Heart right ventricle (tissue), 16 donors: ENCODE measurements at regions of chr10 and their contacts with region 1.

Region 1: GRCh38 chr10:122142641-122143237 is 128.4 kb upstream of the BTBD16 start:
- DNase-seq: peak; percentile 45 to 62
- ATAC-seq: peak in 2 of 8 donors; percentile 1 to 21
- H3K4me3 ChIP-seq: no peak overlapping the region
- H3K27ac ChIP-seq: peak overlapping the region in 9 of 10 donors; percentile 82 to 94 (median 89)
- H3K4me1 ChIP-seq: peaks cover 39 to 84% (median 71%) of the 10 kb centered on the region in 9 donors
- H3K27me3 ChIP-seq: no peaks in the 10 kb centered on the region
- CTCF ChIP-seq: peak; percentile 89 to 96 (median 93)

Region 2: DNA sequence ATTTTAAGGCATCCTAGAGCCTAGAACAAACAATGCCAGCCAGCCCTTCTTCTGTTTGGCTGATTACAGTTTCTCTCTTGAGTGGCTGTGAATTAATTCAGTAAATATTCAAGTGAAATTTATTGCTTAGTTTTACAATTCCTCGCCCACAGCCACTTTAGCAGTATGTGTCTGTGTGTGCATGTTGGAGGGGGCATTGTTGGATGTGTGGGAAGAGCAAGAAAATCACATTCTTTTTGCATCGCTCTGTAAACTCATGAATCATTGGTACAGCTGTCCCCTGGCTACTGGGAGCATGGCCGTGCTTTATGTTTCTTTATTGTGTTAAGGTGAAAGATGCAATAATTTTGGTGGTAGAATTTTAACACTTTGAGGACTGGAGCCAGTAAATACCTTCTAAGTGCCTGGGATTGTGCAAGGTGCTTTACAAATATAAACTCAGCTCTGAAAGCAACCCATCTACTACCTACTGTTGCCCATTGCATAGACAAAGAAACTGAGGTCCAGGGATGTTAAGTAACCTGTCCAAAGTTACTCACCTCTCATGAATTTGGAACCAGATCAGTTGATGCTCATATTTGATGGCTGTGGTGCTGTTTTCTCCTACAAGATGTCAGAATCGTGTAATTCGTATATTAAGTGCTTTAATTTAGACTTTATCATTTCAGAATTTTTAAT is 38.5 kb after region 1 on chr10:
- intact Hi-C with region 1: loop called in 2 of 10 experiments (anchors 5 kb)
- DNase-seq: no peak
- ATAC-seq: no peak
- H3K4me3 ChIP-seq: no peak overlapping the region
- H3K27ac ChIP-seq: peak overlapping the region in 2 of 10 donors; percentile 17 to 23
- H3K4me1 ChIP-seq: peaks cover 13 to 40% (median 35%) of the 10 kb centered on the region in 9 donors
- H3K27me3 ChIP-seq: no peaks in the 10 kb centered on the region
- CTCF ChIP-seq: no peak

Region 3: GRCh38 chr10:122186818-122187810 is 44.4 kb after region 1 on chr10:
- intact Hi-C with region 1: loop called in 2 of 10 experiments (anchors 5 kb)
- DNase-seq: no peak
- ATAC-seq: peak in 7 of 8 donors; percentile 18 to 63 (median 29)
- H3K4me3 ChIP-seq: no peak overlapping the region
- H3K27ac ChIP-seq: peak overlapping the region in 6 of 10 donors; percentile 15 to 73 (median 50)
- H3K4me1 ChIP-seq: peaks cover 21 to 73% (median 52%) of the 10 kb centered on the region in 9 donors
- H3K27me3 ChIP-seq: no peaks in the 10 kb centered on the region
- CTCF ChIP-seq: no peak

Region 4: GRCh38 chr10:122207596-122207995 is 64.9 kb after region 1 on chr10:
- intact Hi-C with region 1: loop called in 3 of 10 experiments (anchors 5 to 10 kb)
- DNase-seq: no peak
- ATAC-seq: peak; percentile 8 to 66 (median 57)
- H3K4me3 ChIP-seq: no peak overlapping the region
- H3K27ac ChIP-seq: no peak overlapping the region
- H3K4me1 ChIP-seq: peaks cover 0 to 46% (median 23%) of the 10 kb centered on the region in 9 donors
- H3K27me3 ChIP-seq: no peaks in the 10 kb centered on the region
- CTCF ChIP-seq: no peak

Region 5: DNA sequence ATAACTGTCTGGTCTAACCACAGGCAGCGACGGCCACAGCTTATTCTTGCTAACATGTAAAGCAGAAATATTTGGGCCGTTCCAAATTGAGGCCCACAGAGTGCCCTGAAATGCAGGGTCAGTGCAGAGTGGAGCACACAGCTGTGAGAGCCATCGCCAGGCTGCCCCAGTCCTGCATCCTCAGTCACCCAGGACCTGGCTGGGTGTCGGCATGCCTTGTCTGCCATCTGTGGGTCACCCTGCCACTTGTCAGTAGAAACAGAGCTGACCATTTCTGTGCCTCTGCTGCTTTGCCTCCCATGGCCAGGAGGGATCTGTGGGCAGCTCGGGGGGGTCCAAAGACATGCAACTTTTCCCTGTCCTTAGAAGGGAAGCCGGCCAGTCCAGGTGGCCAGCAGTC is 71.0 kb after region 1 on chr10:
- intact Hi-C with region 1: loop called in 4 of 10 experiments (anchors 5 to 10 kb)
- DNase-seq: no peak
- ATAC-seq: peak in 7 of 8 donors; percentile 30 to 67 (median 58)
- H3K4me3 ChIP-seq: no peak overlapping the region
- H3K27ac ChIP-seq: no peak overlapping the region
- H3K4me1 ChIP-seq: peaks cover 0 to 12% (median 0%) of the 10 kb centered on the region in 9 donors
- H3K27me3 ChIP-seq: no peaks in the 10 kb centered on the region
- CTCF ChIP-seq: peak in 3 of 9 donors; percentile 18 to 35 (median 31)

Region 6: DNA sequence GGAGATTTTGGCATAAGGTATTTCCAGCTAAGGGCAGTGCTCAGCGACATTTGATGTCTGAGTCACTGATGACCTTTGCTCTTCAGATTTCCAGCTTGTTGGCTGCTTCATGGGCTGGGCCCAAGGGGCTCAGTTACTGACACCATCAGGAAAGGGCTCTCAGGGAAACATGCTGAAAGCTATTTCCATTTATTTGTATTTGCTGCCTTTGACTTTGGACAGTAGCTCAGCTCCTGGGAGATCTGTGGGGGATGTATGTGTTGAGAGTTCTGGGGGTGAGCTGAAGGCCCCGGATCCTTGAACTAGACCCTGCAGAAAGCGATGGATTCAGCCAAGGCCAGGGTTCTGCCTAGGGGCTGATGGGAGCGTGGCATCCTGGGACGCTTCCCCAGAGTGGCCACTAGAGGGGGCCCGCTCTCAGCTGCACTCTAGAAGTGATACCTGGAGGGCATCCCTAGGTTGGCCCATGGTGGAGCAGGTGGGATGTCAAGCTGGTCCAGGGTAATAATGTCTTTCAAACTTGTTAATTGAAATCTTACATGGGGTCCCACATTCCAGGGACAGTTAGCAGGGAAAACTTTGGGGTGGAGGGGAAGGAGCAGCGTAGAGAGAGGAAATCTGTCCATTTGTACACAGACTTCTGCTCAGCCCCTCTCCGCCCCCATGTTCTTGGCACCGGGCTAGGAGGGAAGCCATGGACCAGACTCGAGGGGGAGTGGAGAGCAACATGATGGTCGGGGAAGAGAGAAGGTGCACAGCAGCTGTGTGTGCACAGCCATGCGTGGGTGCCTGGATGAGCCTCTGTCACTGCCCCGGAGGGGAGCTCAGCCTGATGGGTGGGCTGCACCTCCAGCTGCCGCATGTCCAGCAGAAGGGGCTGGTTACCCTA is 125.4 kb after region 1 on chr10:
- intact Hi-C with region 1: loop called in 5 of 10 experiments (anchors 5 to 10 kb)
- DNase-seq: peak in 1 of 2 donors; percentile 48
- ATAC-seq: peak; percentile 43 to 78 (median 70)
- H3K4me3 ChIP-seq: no peak overlapping the region
- H3K27ac ChIP-seq: no peak overlapping the region
- H3K4me1 ChIP-seq: peaks cover 0 to 42% (median 8%) of the 10 kb centered on the region in 9 donors
- H3K27me3 ChIP-seq: no peaks in the 10 kb centered on the region
- CTCF ChIP-seq: peak; percentile 88 to 95 (median 92)

Region 7: DNA sequence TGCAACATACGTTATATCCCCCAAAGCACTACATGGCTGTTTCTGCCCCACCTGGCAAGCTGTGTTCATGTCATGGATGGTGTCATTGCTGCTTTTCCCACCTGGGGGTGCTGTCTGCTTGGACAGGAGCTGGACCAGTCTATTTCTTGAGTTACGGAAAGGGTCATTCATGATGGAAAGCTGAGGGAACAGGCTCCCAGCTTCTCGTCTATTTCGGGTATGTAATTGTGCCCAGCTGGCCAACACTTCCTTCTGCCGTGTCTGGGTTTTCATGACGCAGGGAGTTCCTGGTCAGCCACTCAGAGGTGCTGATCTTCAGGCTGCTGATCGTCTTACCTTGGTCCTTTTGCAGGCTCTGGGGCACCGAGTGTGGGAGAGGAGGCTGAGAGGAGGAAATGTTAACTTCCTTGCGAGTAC is 137.0 kb after region 1 on chr10:
- intact Hi-C with region 1: loop called in 1 of 10 experiments (anchors 10 kb)
- DNase-seq: peak in 1 of 2 donors; percentile 49
- ATAC-seq: peak in 7 of 8 donors; percentile 36 to 73 (median 66)
- H3K4me3 ChIP-seq: no peak overlapping the region
- H3K27ac ChIP-seq: peak overlapping the region in 1 of 10 donors; percentile 25
- H3K4me1 ChIP-seq: peaks cover 0 to 13% (median 3%) of the 10 kb centered on the region in 9 donors
- H3K27me3 ChIP-seq: no peaks in the 10 kb centered on the region
- CTCF ChIP-seq: peak in 8 of 9 donors; percentile 38 to 71 (median 62)

Region 8: DNA sequence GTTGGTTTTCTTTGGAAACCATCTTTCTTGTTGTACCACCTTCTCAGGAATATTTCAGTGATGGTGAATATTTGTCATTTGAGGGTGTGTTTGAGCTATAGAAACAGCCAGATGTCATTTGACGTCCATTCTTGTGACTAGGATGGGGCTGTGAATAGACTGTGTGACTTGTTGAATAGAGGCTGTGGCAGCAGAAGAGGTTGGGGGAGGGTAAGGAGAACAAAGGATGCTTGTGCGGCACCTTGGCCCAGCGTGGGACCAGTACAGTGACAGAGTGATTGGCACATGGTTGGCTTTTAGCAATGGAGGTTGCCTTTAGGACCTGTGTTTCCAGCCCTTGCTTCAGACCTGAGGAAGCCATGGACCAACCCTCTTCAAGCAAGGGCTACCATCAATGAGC is 429.2 kb after region 1 on chr10:
- intact Hi-C with region 1: no loop called
- DNase-seq: no peak
- ATAC-seq: no peak
- H3K4me3 ChIP-seq: no peak overlapping the region
- H3K27ac ChIP-seq: no peak overlapping the region
- H3K4me1 ChIP-seq: no peaks in the 10 kb centered on the region
- H3K27me3 ChIP-seq: no peaks in the 10 kb centered on the region
- CTCF ChIP-seq: no peak